Activated CD8-positive, alpha-beta memory T cell treated with anti-CD3 and anti-CD28 coated beads, Interleukin-2, amount 10 ng/mL, durations not matched to agents 7 days and 5 days (primary cell): ENCODE measurements at regions of chr2 and their contacts with region 1.

Region 1: GRCh38 chr2:7427293-7428060 is 510.3 kb downstream of the RNF144A start:
- DNase-seq: no peak
- ATAC-seq: no peak
- H3K4me3 Mint-ChIP-seq: peak overlapping the region; percentile 45
- H3K27ac Mint-ChIP-seq: peak overlapping the region; percentile 75
- H3K4me1 Mint-ChIP-seq: peaks cover 42% of the 10 kb centered on the region
- H3K27me3 Mint-ChIP-seq: no peaks in the 10 kb centered on the region

Region 2: DNA sequence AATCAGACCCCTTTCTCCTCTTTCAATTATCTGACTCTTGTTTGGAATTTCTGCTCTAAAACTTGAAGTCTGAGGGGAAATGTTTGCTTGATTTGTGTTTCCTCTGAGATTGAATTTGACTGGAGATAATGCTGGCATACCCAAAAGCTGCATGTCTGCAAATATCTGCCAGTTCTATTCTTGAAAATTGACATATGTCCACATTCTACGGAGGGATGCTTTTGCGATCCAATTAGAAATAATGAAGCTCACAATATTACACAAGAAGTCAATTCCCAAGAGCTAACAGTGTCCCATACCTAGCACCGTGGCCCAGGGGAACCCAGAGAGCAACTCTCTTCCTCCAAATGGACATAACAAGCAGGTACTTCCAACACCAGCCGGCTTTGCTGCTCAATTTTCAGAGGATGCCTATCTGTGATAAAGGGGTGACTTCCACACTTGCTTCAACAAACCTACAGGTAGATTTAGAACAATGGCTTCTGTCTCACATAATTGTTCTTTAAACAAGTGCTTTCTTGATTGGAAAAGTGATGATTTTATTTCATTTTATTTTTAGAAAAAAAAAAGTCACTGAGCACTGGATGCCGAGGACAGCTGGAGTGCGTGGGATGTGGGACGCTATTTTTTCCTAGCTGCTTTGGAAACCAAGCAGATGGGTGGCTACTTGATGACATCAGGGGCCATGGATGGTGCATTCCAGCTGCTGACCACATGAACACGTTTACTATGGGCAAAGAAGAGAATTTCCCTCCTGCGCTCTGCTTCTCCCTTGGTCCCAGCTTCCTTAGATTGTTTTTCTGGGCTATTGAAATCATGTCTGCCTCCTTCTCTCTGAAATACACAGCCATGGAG is 21.4 kb before region 1 on chr2:
- CTCF ChIA-PET with region 1: no interaction called
- DNase-seq: no peak
- ATAC-seq: no peak
- H3K4me3 Mint-ChIP-seq: no peak overlapping the region
- H3K27ac Mint-ChIP-seq: no peak overlapping the region
- H3K4me1 Mint-ChIP-seq: peaks cover 13% of the 10 kb centered on the region
- H3K27me3 Mint-ChIP-seq: peaks cover 34% of the 10 kb centered on the region

Region 3: DNA sequence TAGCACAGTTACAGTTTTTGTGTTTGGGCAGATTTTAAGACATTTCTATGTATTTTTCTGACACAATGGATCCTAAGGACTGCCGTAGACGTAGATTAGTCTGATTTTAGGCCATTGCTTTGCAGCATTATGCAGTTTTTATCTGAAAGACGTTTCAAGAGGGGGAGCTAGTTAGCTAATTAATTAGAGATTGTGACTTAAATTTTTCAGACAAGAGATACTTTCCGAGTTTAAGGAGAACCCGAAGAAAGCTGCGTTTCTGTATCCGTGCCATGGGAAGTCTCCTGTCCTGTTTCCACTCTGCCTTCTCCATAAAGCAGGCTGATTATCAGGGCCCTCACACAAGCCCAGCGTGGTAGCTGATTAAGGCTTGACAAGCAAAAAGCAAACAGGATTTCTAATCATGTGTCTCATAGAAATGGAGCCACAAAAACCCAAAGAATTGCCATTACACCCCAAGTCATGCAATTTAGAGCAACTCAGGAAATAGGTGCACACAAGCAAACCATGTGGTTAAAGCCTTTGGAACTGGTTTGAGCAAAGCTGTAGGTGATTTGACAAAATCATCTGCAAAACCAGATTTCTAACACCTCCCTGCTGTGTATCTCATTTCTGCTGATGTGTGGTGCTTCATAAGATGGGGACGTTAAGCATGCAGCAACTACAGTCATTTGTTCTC is 297.8 kb after region 1 on chr2:
- CTCF ChIA-PET with region 1: interaction called, 31 read pairs
- DNase-seq: peak; percentile 84
- ATAC-seq: peak; percentile 73
- H3K4me3 Mint-ChIP-seq: peak overlapping the region; percentile 90
- H3K27ac Mint-ChIP-seq: peak overlapping the region; percentile 97
- H3K4me1 Mint-ChIP-seq: peaks cover 51% of the 10 kb centered on the region
- H3K27me3 Mint-ChIP-seq: no peaks in the 10 kb centered on the region

Region 4: DNA sequence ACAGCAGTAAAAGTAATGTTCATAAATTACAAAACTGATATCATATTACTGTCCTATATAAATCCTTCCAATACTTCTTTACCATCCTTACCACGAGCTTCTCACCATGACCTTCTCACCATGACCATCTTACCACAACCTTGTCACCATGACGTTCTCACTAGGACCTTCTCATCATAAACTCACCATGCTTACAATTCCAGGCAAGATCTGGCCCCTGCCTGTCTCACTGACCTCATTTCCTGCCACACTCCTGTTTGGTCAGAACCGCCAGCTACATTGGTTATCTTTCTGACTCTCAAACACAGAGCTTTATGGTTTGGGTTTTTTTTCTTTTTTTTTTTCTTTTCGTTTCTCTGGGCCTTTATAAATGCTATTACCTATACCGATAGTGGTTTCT is 317.4 kb after region 1 on chr2:
- CTCF ChIA-PET with region 1: interaction called, 10 read pairs
- DNase-seq: peak; percentile 95
- ATAC-seq: peak; percentile 72
- H3K4me3 Mint-ChIP-seq: peak overlapping the region; percentile 20
- H3K27ac Mint-ChIP-seq: peak overlapping the region; percentile 80
- H3K4me1 Mint-ChIP-seq: peaks cover 73% of the 10 kb centered on the region
- H3K27me3 Mint-ChIP-seq: no peaks in the 10 kb centered on the region

Region 5: DNA sequence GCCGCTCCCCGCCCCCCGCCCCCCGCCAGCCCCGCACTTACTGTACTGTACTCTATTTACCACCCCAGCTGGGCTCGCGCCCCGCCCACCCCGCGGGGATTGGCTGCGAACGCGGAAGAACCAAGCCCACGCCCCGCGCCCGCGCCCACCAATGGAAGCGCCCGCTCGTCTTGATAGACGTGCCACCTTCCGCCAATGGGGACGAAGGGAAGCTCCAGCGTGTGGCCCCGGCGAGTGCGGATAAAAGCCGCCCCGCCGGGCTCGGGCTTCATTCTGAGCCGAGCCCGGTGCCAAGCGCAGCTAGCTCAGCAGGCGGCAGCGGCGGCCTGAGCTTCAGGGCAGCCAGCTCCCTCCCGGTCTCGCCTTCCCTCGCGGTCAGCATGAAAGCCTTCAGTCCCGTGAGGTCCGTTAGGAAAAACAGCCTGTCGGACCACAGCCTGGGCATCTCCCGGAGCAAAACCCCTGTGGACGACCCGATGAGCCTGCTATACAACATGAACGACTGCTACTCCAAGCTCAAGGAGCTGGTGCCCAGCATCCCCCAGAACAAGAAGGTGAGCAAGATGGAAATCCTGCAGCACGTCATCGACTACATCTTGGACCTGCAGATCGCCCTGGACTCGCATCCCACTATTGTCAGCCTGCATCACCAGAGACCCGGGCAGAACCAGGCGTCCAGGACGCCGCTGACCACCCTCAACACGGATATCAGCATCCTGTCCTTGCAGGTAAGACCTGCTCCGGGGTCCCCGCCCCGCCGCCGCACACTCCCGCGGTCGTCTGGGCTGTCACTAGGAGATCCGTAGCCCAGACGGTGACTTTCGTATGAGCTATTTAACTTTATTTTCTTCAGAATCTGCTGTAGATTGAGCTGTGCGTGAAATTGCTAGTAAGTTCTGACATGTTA is 1254.6 kb after region 1 on chr2 and contains the start of gene ID2:
- CTCF ChIA-PET with region 1: interaction called, 10 read pairs
- DNase-seq: peak; percentile 99
- ATAC-seq: peak; percentile 69
- H3K4me3 Mint-ChIP-seq: peak within 1 kb of the TSS; percentile 97
- H3K27ac Mint-ChIP-seq: peak within 1 kb of the TSS; percentile 93
- H3K4me1 Mint-ChIP-seq: peaks cover 34% of the 10 kb centered on the region
- H3K27me3 Mint-ChIP-seq: peaks cover 10% of the 10 kb centered on the region
- total RNA-seq, gene ID2: 342 to 431 TPM